Activated naive CD8-positive, alpha-beta T cell treated with anti-CD3 and anti-CD28 coated beads, Interleukin-2, amount 10 ng/mL, durations not matched to agents 7 days and 5 days (primary cell): ENCODE measurements at regions of chr5 and their contacts with region 1.

Region 1: DNA sequence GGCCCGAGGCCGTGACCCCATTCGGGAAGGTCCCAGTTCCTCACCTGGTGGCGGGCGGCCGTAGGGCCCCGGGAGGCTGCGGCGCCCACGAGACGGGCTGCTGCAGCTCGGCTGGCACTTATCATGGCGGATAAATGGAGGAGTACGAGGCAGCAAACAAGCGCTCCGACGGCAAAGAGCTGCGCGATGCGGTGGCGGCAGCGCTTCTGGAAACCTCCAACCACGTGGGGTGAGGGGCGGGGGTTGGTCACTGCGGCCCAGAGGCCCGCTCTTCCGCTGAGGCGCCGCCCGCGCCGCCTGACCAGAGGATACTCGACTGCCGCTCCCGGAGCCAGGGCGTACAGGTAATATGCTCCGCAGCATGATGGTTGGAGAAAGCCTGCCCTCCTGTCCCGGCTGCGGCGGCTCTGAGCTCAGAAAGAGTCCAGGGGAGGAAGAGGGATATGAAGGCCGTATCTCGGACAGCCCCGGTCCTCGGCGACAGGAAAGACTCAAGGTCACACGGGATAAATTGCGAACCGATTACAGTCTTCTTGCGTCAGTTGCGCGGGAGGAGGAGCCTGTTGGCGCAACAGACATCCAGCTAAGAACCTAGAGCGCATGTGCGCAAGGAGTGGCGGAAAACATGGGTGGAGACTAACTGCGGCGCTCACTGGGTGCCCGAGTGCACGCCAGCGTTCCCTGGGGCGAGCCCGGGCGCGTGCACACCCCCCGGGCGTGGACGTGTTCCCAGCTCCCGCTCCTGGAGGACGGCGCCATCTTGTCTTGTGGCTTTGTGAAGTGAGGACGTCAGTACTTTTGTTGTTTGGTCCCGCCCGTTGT is at the start of gene HSPA9:
- DNase-seq: peak; percentile 95
- ATAC-seq: peak; percentile 90
- H3K4me3 Mint-ChIP-seq: peak within 1 kb of the TSS; percentile 90
- H3K27ac Mint-ChIP-seq: peak within 1 kb of the TSS; percentile 100
- H3K4me1 Mint-ChIP-seq: peaks cover 17% of the 10 kb centered on the region
- H3K27me3 Mint-ChIP-seq: no peaks in the 10 kb centered on the region
- total RNA-seq, gene HSPA9: 168 to 183 TPM

Region 2: DNA sequence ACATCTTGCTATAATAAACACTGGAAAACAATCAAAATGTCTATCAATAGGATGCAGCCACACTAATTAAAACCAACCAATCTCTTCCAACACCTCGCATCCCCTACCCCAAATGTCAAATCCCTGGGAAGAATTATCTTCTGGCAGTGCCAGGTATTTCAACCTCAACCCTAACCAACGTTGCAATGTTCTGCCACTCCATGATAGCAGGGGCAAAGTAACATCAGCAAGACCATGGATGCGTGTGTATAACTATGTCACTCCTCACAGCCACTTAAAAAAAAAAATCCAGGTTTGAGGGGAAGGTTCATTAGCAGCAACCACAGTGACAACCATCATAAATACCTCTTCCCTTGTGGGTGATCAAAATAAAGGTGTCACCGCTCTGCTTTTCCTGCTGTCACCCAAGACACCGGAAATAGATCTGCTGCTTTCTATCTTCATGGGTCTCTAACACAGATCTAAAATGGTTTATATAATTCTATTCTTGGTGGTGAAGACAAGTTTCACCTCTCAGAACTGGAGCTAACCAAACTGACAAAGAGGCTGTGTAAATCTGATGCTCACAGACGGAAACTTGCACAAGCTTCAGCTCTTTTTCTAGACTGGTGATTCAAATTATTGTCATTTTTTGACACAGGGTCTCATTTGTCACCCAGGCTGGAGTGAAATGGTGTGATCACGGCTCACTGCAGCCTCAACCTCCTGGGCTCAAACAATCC is 10.1 kb before region 1 on chr5:
- POLR2A ChIA-PET with region 1: interaction called, 17 read pairs
- DNase-seq: no peak
- ATAC-seq: peak; percentile 78
- H3K4me3 Mint-ChIP-seq: peak overlapping the region; percentile 29
- H3K27ac Mint-ChIP-seq: peak overlapping the region; percentile 83
- H3K4me1 Mint-ChIP-seq: peaks cover 33% of the 10 kb centered on the region
- H3K27me3 Mint-ChIP-seq: no peaks in the 10 kb centered on the region

Region 3: GRCh38 chr5:138594305-138595058 is 19.1 kb after region 1 on chr5:
- POLR2A ChIA-PET with region 1: no interaction called
- DNase-seq: no peak
- ATAC-seq: no peak
- H3K4me3 Mint-ChIP-seq: no peak overlapping the region
- H3K27ac Mint-ChIP-seq: no peak overlapping the region
- H3K4me1 Mint-ChIP-seq: no peaks in the 10 kb centered on the region
- H3K27me3 Mint-ChIP-seq: peaks cover 32% of the 10 kb centered on the region

Region 4: GRCh38 chr5:138654281-138654867 is 79.0 kb after region 1 on chr5:
- POLR2A ChIA-PET with region 1: no interaction called
- DNase-seq: peak; percentile 60
- ATAC-seq: peak; percentile 87
- H3K4me3 Mint-ChIP-seq: no peak overlapping the region
- H3K27ac Mint-ChIP-seq: peak overlapping the region; percentile 40
- H3K4me1 Mint-ChIP-seq: peaks cover 13% of the 10 kb centered on the region
- H3K27me3 Mint-ChIP-seq: peaks cover 91% of the 10 kb centered on the region

Region 5: DNA sequence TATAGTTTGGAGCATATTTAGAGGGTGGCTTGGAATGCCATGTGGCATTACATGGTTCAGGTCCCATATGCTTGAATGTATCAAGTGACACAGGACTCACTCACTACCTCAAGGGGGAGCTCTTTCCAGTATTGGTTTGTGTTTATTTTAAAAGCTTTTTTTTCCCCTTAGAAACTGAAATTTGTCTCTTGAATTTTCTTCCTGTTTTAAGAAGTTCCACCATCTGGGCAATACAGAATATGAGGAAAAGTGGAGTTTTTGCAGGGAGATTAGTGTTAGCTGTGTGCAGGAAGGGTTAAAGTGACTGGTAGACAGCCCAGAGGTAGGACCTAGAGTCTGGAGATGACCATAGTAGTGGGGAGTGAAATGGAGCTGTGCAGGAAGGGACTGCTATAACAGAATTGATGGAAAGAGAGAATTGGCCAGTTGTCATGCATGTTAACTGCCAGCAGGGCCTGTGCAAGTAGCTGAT is 214.4 kb after region 1 on chr5:
- POLR2A ChIA-PET with region 1: no interaction called
- DNase-seq: no peak
- ATAC-seq: peak; percentile 56
- H3K4me3 Mint-ChIP-seq: no peak overlapping the region
- H3K27ac Mint-ChIP-seq: no peak overlapping the region
- H3K4me1 Mint-ChIP-seq: peaks cover 5% of the 10 kb centered on the region
- H3K27me3 Mint-ChIP-seq: peaks cover 59% of the 10 kb centered on the region